Activated CD4-positive, alpha-beta T cell treated with anti-CD3 and anti-CD28 coated beads, Interleukin-2, amount 10 ng/mL, durations not matched to agents 7 days and 5 days (primary cell): ENCODE measurements at regions of chr1 and their contacts with region 1.

Region 1: GRCh38 chr1:234170622-234171021 is 202.6 kb upstream of the COA6 start:
- DNase-seq: peak; percentile 32
- H3K4me3 Mint-ChIP-seq: peak overlapping the region; percentile 28
- H3K27ac Mint-ChIP-seq: peak overlapping the region; percentile 86
- H3K4me1 Mint-ChIP-seq: peaks cover 58% of the 10 kb centered on the region
- H3K27me3 Mint-ChIP-seq: no peaks in the 10 kb centered on the region

Region 2: DNA sequence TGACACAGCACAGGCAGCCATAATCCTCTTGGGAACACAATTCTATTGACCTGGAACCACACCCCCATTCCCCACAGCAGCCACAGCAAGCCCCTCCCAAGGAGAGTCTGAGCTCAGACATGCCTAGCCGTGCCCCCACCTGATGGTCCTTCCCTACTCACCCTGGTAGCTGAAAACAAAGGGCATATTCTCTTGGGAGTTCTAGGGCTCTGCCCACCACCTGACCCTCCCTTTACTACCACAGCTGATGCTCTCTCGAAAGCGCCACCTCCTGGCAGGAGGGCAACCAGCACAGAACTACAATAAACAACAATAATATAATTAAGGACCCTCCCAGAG is 17.8 kb after region 1 on chr1:
- CTCF ChIA-PET with region 1: interaction called, 51 read pairs
- POLR2A ChIA-PET with region 1: interaction called, 3 read pairs
- DNase-seq: peak; percentile 26
- H3K4me3 Mint-ChIP-seq: no peak overlapping the region
- H3K27ac Mint-ChIP-seq: no peak overlapping the region
- H3K4me1 Mint-ChIP-seq: peaks cover 3% of the 10 kb centered on the region
- H3K27me3 Mint-ChIP-seq: peaks cover 62% of the 10 kb centered on the region